ENCODE measurements at regions of chr7 and their contacts with region 1.

Region 1: GRCh38 chr7:74544706-74545469 is 91.2 kb downstream of the GTF2IRD1 start:
- DNase-seq: no peak

Region 2: GRCh38 chr7:74449809-74450397 is 95.0 kb before region 1 on chr7:
- intact Hi-C with region 1: loop called in 1 of 2 experiments (anchors 10 kb)
- DNase-seq: no peak

Region 3: DNA sequence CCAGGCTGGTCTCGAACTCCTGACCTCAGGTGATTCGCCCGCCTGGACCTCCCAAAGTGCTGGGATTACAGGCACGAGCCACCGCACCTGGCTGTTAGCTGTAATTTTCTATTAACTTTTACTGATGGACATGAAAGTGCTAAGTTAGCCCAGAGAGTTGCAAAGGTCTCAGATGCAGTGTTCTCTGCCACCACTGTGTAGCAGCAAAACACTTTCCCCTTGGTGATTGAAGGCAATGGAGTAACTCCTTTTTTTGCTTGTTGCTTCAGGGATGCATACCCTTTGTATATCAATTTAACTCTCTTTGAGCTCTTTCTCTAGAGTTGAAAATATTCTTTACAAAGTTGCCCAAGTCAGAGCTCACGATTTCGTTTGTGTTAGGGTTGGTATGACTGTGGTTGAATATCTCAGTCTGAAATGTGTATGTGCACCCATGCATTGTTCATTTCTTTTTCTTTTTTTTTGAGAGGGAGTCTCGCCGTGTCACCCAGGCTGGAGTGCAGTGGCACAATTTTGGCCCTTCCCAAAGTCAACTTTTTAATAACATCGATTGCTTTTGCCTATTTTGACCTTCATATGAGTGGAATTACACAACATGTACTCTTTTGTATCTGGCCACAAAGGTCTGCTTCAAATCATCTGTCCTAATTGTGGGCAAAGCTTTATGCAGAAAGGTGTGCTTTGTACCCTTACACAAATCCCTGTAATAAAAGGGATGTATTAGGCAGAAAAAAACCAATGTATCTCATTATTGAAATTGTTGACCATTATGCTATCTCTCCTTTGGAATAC is 165.2 kb after region 1 on chr7:
- intact Hi-C with region 1: no loop called
- DNase-seq: no peak

Measured in posterior vena cava (tissue), 2 donors.